ENCODE measurements at regions of chr12 and their contacts with region 1.

Region 1: DNA sequence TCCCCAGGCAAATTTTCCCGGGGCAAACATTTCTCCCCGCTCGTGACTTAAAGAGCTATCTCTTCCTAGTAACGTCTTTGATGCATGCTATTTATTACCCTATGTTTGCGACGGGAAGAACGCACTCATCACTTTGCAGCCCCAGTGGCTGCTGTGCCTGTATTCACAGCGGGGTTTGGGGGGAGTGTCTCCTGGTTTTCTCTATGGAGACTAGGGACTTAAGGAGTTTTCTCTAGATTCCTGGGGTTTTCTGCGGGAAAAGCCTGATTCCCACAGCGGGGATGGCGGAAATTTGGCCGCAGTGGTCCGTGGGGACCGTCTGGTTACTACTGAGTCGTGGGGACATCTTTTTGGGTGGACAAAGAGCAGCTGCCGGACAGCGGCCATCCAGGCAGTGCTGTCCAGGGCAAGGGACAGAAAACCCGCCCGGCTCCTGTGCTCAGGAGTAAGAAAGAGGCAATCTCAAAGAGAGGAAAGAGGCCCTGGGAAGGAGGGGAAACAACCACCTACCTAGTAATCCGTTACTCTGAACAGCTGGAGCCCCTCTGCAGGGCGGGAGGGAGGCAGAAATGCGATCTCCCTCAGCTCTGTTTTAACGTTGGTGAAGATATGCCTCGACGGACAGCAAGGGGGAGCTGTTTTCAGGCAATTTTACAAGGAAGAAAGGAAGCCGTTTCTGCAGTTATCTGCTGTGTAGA is 771 bp upstream of the AVPR1A start:
- DNase-seq: peak; percentile 38 to 73
- ATAC-seq: peak; percentile 68
- H3K4me3 ChIP-seq: peak overlapping the region; percentile 8 to 17
- H3K27ac ChIP-seq: no peak overlapping the region
- H3K4me1 ChIP-seq: peaks cover 0 to 3% of the 10 kb centered on the region in 2 donors
- H3K27me3 ChIP-seq: no peaks in the 10 kb centered on the region

Region 2: DNA sequence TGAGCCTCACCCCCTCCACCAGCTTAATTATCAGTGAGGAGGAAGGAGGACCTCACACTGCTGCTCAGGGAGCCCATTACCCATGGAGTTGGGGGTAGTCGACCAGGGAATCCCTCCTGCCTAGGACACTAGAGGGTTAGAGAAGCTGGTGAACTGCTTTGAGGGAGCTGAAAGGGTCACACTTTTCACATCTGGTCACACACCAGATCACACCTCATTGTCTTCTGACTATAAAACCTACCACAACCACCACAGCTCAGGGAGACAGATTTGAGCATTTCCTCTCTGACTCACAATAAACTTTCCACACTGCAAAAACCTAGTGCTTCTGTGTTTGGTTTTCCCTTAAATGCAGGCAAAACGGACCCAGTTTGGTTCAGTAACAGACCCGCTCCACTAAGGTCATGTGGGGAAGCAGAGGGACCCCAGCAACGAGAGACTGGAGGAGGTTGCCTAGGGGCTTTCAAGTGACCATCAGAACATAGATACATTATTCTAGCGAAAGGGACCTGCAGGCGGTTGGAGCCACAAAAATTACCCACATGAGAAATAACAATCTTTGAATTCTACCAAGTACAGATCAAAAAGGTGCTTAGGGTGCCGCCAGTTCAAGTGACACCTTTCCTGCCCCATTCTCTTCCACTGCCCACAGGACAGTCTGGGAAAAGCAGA is 150.6 kb after region 1 on chr12:
- intact Hi-C with region 1: loop called in 1 of 2 experiments (anchors 10 kb)
- DNase-seq: no peak
- ATAC-seq: no peak
- H3K4me3 ChIP-seq: no peak overlapping the region
- H3K27ac ChIP-seq: peak overlapping the region in 1 of 2 donors; percentile 91
- H3K4me1 ChIP-seq: no peaks in the 10 kb centered on the region
- H3K27me3 ChIP-seq: no peaks in the 10 kb centered on the region

Region 3: DNA sequence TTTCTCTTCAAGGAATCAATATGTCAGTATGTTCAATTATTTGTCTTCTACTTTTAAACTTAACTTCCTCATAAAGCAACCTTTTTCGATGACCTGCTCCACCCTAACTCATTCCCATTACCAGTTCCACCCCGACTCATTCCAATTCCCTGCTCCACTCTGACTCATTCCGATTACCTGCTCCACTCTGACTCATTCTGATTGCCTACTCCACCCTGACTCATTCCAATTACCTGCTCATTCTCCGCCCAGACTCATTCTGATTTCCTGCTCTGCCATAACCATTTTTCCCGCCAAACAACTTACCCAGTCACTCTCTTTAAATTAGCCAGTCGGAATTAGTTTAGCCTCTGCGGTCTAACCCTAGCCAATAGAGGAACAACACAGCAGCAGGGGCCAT is 267.3 kb after region 1 on chr12:
- intact Hi-C with region 1: loop called in 1 of 2 experiments (anchors 10 kb)
- DNase-seq: no peak
- ATAC-seq: no peak
- H3K4me3 ChIP-seq: no peak overlapping the region
- H3K27ac ChIP-seq: no peak overlapping the region
- H3K4me1 ChIP-seq: no peaks in the 10 kb centered on the region
- H3K27me3 ChIP-seq: no peaks in the 10 kb centered on the region

Region 4: GRCh38 chr12:63668028-63668799 is 516.4 kb after region 1 on chr12 and contains the start of gene DPY19L2:
- intact Hi-C with region 1: loop called in 1 of 2 experiments (anchors 5 kb)
- DNase-seq: peak; percentile 64 to 88
- ATAC-seq: peak; percentile 92
- H3K4me3 ChIP-seq: peak within 1 kb of the TSS; percentile 51 to 68
- H3K27ac ChIP-seq: peak within 1 kb of the TSS in 1 of 2 donors; percentile 30
- H3K4me1 ChIP-seq: no peaks in the 10 kb centered on the region
- H3K27me3 ChIP-seq: no peaks in the 10 kb centered on the region
- total RNA-seq, gene DPY19L2: 11.9 to 40.8 TPM